Mammary epithelial cell (primary cell): ENCODE measurements at regions of chr5 and their contacts with region 1.

Region 1: DNA sequence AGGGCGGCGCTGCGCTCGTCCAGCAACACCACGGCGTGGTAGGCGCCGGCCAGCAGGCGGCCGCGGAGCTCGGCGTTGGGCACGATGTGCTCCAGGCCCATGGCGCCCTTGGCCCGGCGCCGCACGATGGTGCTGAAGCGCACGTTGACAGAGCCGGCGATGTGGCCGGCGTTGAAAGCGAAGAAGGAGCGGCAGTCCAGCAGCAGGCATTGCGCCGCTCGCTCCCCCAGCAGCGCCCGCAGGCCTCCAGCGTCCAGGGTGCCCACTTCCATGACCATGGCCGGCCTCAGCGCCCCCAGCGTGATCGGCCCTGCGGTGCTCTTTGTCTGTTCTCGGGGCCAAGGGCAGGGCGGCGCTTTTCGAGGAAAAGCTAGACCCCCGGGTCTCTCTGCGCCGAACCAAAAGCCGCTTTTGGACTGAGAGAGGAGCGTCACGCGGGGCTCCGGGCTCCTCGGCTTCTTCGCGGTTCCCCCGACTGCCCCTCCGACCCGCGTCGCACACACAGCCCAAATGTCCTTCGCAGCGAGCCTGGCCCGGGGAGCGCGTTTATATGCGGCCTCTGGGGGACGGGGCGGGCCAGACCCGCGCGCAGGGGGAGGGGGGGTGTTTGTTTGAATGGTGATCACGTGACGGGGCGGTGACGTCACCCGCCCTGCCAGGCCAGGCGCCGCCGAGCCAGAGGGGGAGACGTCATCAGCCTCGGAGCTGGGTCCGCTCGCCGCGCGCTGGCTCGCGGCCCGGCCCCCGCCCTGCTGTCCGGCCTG is at the start of gene DUSP1:
- DNase-seq: peak; percentile 95
- H3K4me3 ChIP-seq: peak within 1 kb of the TSS; percentile 70 to 92 (median 73)
- H3K27ac ChIP-seq: peak within 1 kb of the TSS; percentile 93
- H3K4me1 ChIP-seq: peaks cover 57% of the 10 kb centered on the region
- H3K27me3 ChIP-seq: no peaks in the 10 kb centered on the region
- CTCF ChIP-seq: peak; percentile 29 to 59
- total RNA-seq, gene DUSP1: 20.7 to 28.8 TPM

Region 2: DNA sequence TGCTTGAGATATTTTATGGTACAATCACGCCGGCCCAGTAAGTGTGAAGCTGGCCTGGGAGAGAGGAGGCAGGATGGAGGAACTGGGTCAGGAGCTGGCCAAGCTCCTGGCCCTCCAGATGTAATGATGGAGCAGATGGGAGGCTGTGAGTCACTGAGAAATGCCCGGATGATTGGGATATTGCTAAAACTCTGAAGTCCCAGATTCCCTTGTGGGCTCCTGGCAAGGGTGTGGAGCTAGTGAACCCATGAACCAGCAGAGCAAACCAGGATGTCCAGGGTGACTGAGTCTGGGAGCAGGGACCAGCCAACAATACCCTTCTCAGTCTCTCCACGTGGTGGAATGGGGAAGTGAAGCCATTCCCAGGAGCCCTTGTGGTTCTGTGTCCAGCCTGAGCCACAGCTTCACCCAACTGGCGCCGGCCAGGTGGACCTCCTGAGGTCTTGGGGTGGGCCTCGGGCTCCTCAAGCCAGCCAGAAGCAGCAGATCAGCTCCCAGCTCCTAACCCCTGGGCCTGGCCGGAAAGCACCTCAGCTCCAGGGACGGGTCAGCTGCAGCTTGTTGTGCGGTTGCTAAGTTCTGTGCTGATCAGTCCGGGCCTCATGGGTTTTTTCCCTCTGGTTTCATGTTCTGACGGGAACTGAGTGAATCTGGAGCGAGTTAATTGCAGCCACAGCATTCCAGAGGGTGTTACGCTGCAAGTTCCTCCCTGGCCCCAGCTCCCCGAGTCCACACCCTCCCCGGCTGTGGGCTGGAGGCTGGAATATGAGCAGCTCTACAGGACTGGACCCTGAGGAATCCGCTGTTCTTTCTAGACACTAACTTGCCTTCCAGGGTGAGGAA is 37.5 kb before region 1 on chr5:
- CTCF ChIA-PET with region 1: no interaction called
- dilution Hi-C with region 1: no loop called
- in situ Hi-C with region 1: loop called in 1 of 2 experiments (anchors 5 kb)
- intact Hi-C with region 1: loop called (anchors 1 kb)
- DNase-seq: peak; percentile 100
- H3K4me3 ChIP-seq: no peak overlapping the region
- H3K27ac ChIP-seq: peak overlapping the region; percentile 100
- H3K4me1 ChIP-seq: peaks cover 31% of the 10 kb centered on the region
- H3K27me3 ChIP-seq: no peaks in the 10 kb centered on the region
- CTCF ChIP-seq: no peak

Region 3: GRCh38 chr5:172833686-172834414 is 63.0 kb after region 1 on chr5 and contains the start of gene ERGIC1:
- CTCF ChIA-PET with region 1: interaction called, 4 read pairs
- dilution Hi-C with region 1: no loop called
- in situ Hi-C with region 1: loop called in 1 of 2 experiments (anchors 5 kb)
- intact Hi-C with region 1: loop called (anchors 1 kb)
- DNase-seq: peak; percentile 78
- H3K4me3 ChIP-seq: peak within 1 kb of the TSS; percentile 73 to 87 (median 82)
- H3K27ac ChIP-seq: peak within 1 kb of the TSS; percentile 72
- H3K4me1 ChIP-seq: peaks cover 8% of the 10 kb centered on the region
- H3K27me3 ChIP-seq: no peaks in the 10 kb centered on the region
- CTCF ChIP-seq: no peak
- total RNA-seq, gene ERGIC1: 58.8 to 98.6 TPM

Region 4: DNA sequence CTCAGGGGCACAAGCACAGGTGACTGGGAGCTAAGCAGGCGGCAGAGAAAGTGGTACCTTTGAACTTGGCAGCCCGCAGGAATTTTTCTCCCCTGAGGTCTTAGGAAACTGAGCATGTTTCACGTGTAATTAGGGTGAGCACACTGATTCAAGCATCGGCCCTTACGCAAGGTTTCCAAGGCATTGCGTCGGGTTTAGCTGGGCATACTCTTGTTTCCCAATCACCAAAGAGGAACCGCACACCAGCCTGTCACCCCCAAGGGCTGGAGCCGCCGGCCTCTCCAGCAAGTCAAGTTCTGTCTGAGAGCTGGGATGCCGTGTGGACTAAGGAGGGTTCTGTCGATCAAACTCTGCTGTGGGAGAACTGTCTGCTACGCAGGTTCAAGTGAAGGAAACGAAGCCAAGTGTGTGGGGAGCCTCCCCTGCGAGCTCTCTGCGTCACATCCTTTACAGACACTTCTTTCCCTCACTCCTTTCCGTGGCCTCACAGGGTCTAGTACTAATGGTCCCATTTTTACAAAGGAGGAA is 116.2 kb after region 1 on chr5:
- CTCF ChIA-PET with region 1: no interaction called
- dilution Hi-C with region 1: no loop called
- in situ Hi-C with region 1: no loop called
- intact Hi-C with region 1: loop called (anchors 1 kb)
- DNase-seq: peak; percentile 86
- H3K4me3 ChIP-seq: no peak overlapping the region
- H3K27ac ChIP-seq: peak overlapping the region; percentile 46
- H3K4me1 ChIP-seq: peaks cover 13% of the 10 kb centered on the region
- H3K27me3 ChIP-seq: no peaks in the 10 kb centered on the region
- CTCF ChIP-seq: no peak

Region 5: DNA sequence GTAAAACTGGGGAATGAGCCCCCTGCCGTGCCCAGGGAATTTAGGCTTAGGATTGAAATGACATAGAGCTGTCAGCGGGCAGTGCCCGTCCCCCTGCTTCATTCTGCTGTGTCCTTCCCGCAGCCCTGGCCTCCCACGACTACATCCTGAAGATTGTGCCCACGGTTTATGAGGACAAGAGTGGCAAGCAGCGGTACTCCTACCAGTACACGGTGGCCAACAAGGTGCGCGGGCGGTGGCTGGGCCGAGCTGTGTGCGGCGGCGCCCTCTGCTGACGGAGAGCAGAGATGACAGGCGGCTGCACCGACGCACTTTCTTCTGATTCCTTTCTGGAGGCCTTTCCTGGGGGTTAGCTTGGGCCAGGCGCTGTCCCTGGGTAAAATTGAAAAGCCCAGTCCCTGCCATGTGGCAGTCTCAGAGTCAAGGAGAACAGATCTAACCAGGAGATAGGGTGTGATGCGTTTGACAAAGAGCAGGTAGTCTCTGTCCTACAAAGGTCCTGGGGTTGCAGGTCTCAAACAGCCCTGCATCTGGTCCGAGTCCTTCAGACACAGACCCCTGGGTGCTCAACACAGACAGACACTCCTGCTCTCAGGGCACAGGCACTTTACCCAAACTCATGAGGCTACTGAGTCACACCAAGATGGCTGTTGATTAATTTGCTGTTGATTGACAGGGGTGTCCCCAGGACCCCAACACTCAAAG is 161.6 kb after region 1 on chr5:
- CTCF ChIA-PET with region 1: interaction called, 4 read pairs
- dilution Hi-C with region 1: no loop called
- in situ Hi-C with region 1: no loop called
- intact Hi-C with region 1: loop called (anchors 1 kb)
- DNase-seq: peak; percentile 40
- H3K4me3 ChIP-seq: no peak overlapping the region
- H3K27ac ChIP-seq: no peak overlapping the region
- H3K4me1 ChIP-seq: peaks cover 9% of the 10 kb centered on the region
- H3K27me3 ChIP-seq: no peaks in the 10 kb centered on the region
- CTCF ChIP-seq: peak; percentile 94 to 97

Region 6: GRCh38 chr5:173238312-173239232 is 467.7 kb after region 1 on chr5:
- CTCF ChIA-PET with region 1: no interaction called
- dilution Hi-C with region 1: no loop called
- in situ Hi-C with region 1: no loop called
- intact Hi-C with region 1: no loop called
- DNase-seq: no peak
- H3K4me3 ChIP-seq: peak overlapping the region in 1 of 3 experiments; percentile 14
- H3K27ac ChIP-seq: no peak overlapping the region
- H3K4me1 ChIP-seq: peaks cover 12% of the 10 kb centered on the region
- H3K27me3 ChIP-seq: peaks cover 72% of the 10 kb centered on the region
- CTCF ChIP-seq: no peak